Gastrocnemius medialis (tissue), 4 donors: ENCODE measurements at regions of chr12 and their contacts with region 1.

Region 1: GRCh38 chr12:53746592-53747092 is 5.1 kb downstream of the CISTR start:
- DNase-seq: peak; percentile 80 to 87
- ATAC-seq: peak; percentile 84 to 93
- H3K4me3 ChIP-seq: no peak overlapping the region
- H3K27ac ChIP-seq: no peak overlapping the region
- H3K4me1 ChIP-seq: peaks cover 0 to 10% of the 10 kb centered on the region in 2 donors
- H3K27me3 ChIP-seq: peaks cover 17 to 50% (median 39%) of the 10 kb centered on the region in 3 donors
- CTCF ChIP-seq: peak; percentile 98 to 100 (median 100)
- POLR2A ChIP-seq: no peak

Region 2: DNA sequence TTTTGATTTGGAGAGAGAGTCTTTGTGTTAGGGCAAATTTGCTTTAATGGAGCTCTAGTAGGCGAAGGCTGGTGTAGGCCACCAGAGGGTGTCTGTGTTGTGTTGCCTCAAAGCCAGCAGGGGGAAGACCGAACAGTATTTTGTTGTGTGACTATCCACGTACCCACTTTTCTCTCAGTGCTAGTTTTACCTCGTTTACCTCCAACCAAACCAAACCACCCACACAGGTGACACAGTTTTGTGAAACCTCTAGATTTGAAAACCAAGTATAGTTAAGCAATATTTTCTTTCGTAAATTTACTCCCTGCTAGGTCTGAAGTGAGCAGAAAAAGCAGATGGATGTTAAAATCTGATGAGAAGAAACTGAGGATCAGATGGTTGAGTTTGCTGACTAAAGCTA is 203.1 kb before region 1 on chr12:
- in situ Hi-C with region 1: loop called in 1 of 4 experiments (anchors 5 kb)
- intact Hi-C with region 1: loop called (anchors 1 kb)
- DNase-seq: peak; percentile 19 to 60
- ATAC-seq: peak; percentile 86 to 97
- H3K4me3 ChIP-seq: no peak overlapping the region
- H3K27ac ChIP-seq: peak overlapping the region; percentile 5 to 67 (median 34)
- H3K4me1 ChIP-seq: peaks cover 0 to 9% of the 10 kb centered on the region in 2 donors
- H3K27me3 ChIP-seq: no peaks in the 10 kb centered on the region
- CTCF ChIP-seq: peak; percentile 77 to 90 (median 79)
- POLR2A ChIP-seq: no peak

Region 3: GRCh38 chr12:53701518-53702260 is 45.0 kb before region 1 on chr12:
- in situ Hi-C with region 1: loop called (anchors 5 kb)
- intact Hi-C with region 1: loop called (anchors 1 kb)
- DNase-seq: peak; percentile 53 to 70
- ATAC-seq: peak; percentile 86 to 87
- H3K4me3 ChIP-seq: no peak overlapping the region
- H3K27ac ChIP-seq: no peak overlapping the region
- H3K4me1 ChIP-seq: no peaks in the 10 kb centered on the region
- H3K27me3 ChIP-seq: peaks cover 20 to 32% (median 21%) of the 10 kb centered on the region in 3 donors
- CTCF ChIP-seq: peak; percentile 78 to 92 (median 91)
- POLR2A ChIP-seq: no peak

Region 4: GRCh38 chr12:53727310-53728041 is 19.2 kb before region 1 on chr12 and contains the start of gene CALCOCO1:
- in situ Hi-C with region 1: no loop called
- intact Hi-C with region 1: loop called (anchors 2 kb)
- DNase-seq: peak; percentile 98 to 99
- ATAC-seq: peak; percentile 96 to 97
- H3K4me3 ChIP-seq: peak within 1 kb of the TSS; percentile 69 to 93 (median 82)
- H3K27ac ChIP-seq: peak within 1 kb of the TSS; percentile 87 to 98 (median 93)
- H3K4me1 ChIP-seq: peaks cover 18% of the 10 kb centered on the region in 2 donors
- H3K27me3 ChIP-seq: no peaks in the 10 kb centered on the region
- CTCF ChIP-seq: no peak
- POLR2A ChIP-seq: peak; percentile 70 to 91
- total RNA-seq, gene CALCOCO1: 158 to 385 (median 239) TPM

Region 5: GRCh38 chr12:53887006-53887405 is 140.4 kb after region 1 on chr12:
- in situ Hi-C with region 1: no loop called
- intact Hi-C with region 1: no loop called
- DNase-seq: no peak
- ATAC-seq: no peak
- H3K4me3 ChIP-seq: no peak overlapping the region
- H3K27ac ChIP-seq: no peak overlapping the region
- H3K4me1 ChIP-seq: no peaks in the 10 kb centered on the region
- H3K27me3 ChIP-seq: peaks cover 0 to 6% (median 2%) of the 10 kb centered on the region in 3 donors
- CTCF ChIP-seq: no peak
- POLR2A ChIP-seq: no peak